Body of pancreas (tissue), 4 donors: ENCODE measurements at regions of chrX and their contacts with region 1.

Region 1: GRCh38 chrX:150772150-150772970 is 79.2 kb downstream of the MTMR1 start:
- DNase-seq: peak; percentile 71 to 80 (median 76)
- ATAC-seq: peak; percentile 81
- H3K4me3 ChIP-seq: no peak overlapping the region
- H3K27ac ChIP-seq: no peak overlapping the region
- H3K4me1 ChIP-seq: no peaks in the 10 kb centered on the region
- H3K27me3 ChIP-seq: no peaks in the 10 kb centered on the region
- CTCF ChIP-seq: peak; percentile 52 to 84 (median 78)
- POLR2A ChIP-seq: no peak

Region 2: GRCh38 chrX:151030845-151031244 is 258.5 kb after region 1 on chrX:
- intact Hi-C with region 1: no loop called
- DNase-seq: no peak
- ATAC-seq: no peak
- H3K4me3 ChIP-seq: no peak overlapping the region
- H3K27ac ChIP-seq: no peak overlapping the region
- H3K4me1 ChIP-seq: no peaks in the 10 kb centered on the region
- H3K27me3 ChIP-seq: no peaks in the 10 kb centered on the region
- CTCF ChIP-seq: no peak
- POLR2A ChIP-seq: no peak

Region 3: GRCh38 chrX:151082076-151082948 is 310.0 kb after region 1 on chrX:
- intact Hi-C with region 1: loop called (anchors 5 kb)
- DNase-seq: peak; percentile 58 to 73 (median 60)
- ATAC-seq: peak; percentile 85
- H3K4me3 ChIP-seq: no peak overlapping the region
- H3K27ac ChIP-seq: no peak overlapping the region
- H3K4me1 ChIP-seq: peaks cover 18% of the 10 kb centered on the region
- H3K27me3 ChIP-seq: no peaks in the 10 kb centered on the region
- CTCF ChIP-seq: peak; percentile 77 to 94 (median 90)
- POLR2A ChIP-seq: no peak